B cell (primary cell): ENCODE measurements at regions of chr6 and their contacts with region 1.

Region 1: DNA sequence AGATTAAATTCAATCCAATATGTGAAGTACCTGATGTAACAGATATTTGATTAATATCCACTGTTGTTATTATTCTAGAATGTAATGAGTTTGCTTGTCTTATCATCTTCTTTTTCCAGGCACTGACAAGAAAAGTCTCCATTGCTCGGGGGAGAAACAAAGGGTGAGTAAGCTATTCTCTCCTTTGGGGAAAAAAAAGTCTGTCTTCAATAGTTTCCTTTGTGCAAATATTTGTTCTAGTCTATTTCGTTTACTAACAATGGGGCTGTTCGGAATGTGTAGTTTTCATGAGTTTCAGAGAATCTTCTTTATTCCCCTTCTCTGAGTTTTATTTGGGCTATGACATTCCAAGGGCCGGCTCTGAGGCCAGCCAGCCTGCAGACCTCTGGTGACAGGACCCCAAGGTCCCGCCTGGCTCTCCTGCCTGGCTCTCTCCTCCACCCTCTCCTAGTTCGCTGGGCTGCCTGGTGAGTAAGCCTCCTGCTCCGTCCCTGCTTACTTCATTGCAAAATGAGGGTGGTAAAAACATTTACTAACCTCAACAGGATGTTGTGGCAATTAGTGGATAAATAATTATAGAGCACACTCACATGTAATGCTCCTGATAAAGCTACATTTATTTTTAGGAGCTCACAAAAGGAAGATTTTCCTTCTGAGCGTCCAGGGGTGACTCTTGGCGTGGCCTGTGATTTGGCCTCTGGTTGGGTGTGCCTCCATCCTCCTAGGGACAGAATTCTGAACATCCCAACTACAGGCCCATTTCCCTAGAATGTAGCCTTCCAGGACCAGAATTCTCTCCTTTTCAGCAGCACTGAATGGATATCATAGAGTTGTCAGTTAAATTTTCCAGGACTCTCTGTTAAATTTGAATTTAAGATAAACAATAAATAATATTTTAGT is 43.1 kb upstream of the SNX9 start:
- DNase-seq: no peak
- ATAC-seq: no peak
- H3K4me3 ChIP-seq: no peak overlapping the region
- H3K4me3 Mint-ChIP-seq: no peak overlapping the region
- H3K27ac ChIP-seq: no peak overlapping the region
- H3K27ac Mint-ChIP-seq: no peak overlapping the region
- H3K4me1 ChIP-seq: no peaks in the 10 kb centered on the region
- H3K4me1 Mint-ChIP-seq: no peaks in the 10 kb centered on the region
- H3K27me3 ChIP-seq: no peaks in the 10 kb centered on the region
- H3K27me3 Mint-ChIP-seq: peaks cover 3% of the 10 kb centered on the region
- CTCF ChIP-seq: no peak

Region 2: DNA sequence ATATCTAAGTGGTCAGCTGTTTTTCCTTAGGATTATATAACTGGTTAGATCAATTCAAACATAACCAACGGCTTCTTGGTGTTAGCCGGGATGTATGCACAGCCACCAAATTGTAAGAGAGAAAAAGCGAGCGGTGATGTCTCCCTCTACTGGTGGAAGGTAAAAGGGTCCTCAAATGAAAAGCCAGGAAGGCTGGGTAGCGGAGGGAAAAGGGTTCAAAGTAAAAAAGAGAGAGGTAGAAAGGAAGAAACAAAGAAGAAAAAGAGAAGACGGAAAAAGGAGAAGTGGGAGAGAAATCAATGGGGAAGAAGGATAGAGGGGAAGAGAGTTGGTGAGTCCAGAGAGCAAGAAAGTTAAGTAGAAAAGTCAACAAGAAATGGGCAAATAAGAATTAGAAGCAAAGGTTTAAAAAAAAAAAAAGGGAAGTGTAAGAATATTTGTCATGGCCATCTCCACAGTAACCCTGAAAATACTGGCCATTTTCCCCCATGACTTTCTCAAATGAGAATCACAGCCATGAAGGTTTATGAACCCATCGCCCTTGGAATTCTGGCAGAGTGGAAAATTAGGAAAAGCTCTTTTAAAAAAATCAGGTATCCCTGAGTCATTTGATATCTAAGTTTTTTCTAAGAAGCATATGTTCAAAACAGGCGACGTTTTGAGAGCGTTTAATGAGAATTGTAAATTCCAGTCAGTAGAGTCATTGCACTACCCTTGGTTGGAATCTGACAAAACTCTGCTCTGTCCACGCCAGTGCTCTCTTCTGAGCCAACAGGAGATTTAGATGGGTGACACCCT is 112.5 kb before region 1 on chr6:
- CTCF ChIA-PET with region 1: no interaction called
- POLR2A ChIA-PET with region 1: no interaction called
- intact Hi-C with region 1: no loop called
- DNase-seq: peak; percentile 82
- ATAC-seq: peak; percentile 74
- H3K4me3 ChIP-seq: no peak overlapping the region
- H3K4me3 Mint-ChIP-seq: peak overlapping the region; percentile 59
- H3K27ac ChIP-seq: no peak overlapping the region
- H3K27ac Mint-ChIP-seq: peak overlapping the region; percentile 48
- H3K4me1 ChIP-seq: peaks cover 9 to 10% of the 10 kb centered on the region in 2 donors
- H3K4me1 Mint-ChIP-seq: peaks cover 8% of the 10 kb centered on the region
- H3K27me3 ChIP-seq: no peaks in the 10 kb centered on the region
- H3K27me3 Mint-ChIP-seq: no peaks in the 10 kb centered on the region
- CTCF ChIP-seq: peak; percentile 95

Region 3: GRCh38 chr6:157798851-157799250 is 18.9 kb after region 1 on chr6:
- CTCF ChIA-PET with region 1: interaction called, 3 read pairs
- POLR2A ChIA-PET with region 1: no interaction called
- intact Hi-C with region 1: loop called (anchors 2 kb)
- DNase-seq: no peak
- ATAC-seq: no peak
- H3K4me3 ChIP-seq: no peak overlapping the region
- H3K4me3 Mint-ChIP-seq: no peak overlapping the region
- H3K27ac ChIP-seq: no peak overlapping the region
- H3K27ac Mint-ChIP-seq: no peak overlapping the region
- H3K4me1 ChIP-seq: no peaks in the 10 kb centered on the region
- H3K4me1 Mint-ChIP-seq: peaks cover 18% of the 10 kb centered on the region
- H3K27me3 ChIP-seq: peaks cover 0 to 3% (median 0%) of the 10 kb centered on the region in 4 experiments
- H3K27me3 Mint-ChIP-seq: no peaks in the 10 kb centered on the region
- CTCF ChIP-seq: no peak